CD8-positive, alpha-beta T cell (primary cell): ENCODE measurements at regions of chr5 and their contacts with region 1.

Region 1: GRCh38 chr5:94057217-94057616 is 315.8 kb upstream of the POU5F2 start:
- DNase-seq: no peak
- ATAC-seq: no peak
- H3K4me3 ChIP-seq: no peak overlapping the region
- H3K4me3 Mint-ChIP-seq: no peak overlapping the region
- H3K27ac ChIP-seq: no peak overlapping the region
- H3K27ac Mint-ChIP-seq: no peak overlapping the region
- H3K4me1 ChIP-seq: no peaks in the 10 kb centered on the region
- H3K4me1 Mint-ChIP-seq: peaks cover 36% of the 10 kb centered on the region
- H3K27me3 ChIP-seq: no peaks in the 10 kb centered on the region
- H3K27me3 Mint-ChIP-seq: no peaks in the 10 kb centered on the region
- CTCF ChIP-seq: no peak

Region 2: DNA sequence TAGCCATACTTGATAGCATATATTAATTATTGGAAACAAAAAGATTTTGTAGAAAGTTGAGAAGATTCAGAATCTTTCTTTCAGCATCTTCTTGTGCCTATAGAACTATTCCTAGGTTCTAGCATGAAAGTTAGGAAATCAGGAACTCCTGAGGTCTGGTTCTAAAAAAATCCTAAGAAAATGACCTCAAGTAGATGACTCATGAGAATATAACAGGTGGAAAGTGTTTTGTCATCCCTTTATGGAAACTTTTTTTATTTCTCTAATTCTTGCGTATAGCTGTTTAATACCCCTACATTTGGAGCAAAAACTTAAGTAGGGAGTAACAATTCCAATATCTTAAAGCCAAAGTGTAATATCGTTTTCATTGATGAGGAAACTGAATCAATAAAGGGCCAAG is 1050.3 kb before region 1 on chr5:
- CTCF ChIA-PET with region 1: no interaction called
- POLR2A ChIA-PET with region 1: no interaction called
- intact Hi-C with region 1: no loop called
- DNase-seq: no peak
- ATAC-seq: no peak
- H3K4me3 ChIP-seq: no peak overlapping the region
- H3K4me3 Mint-ChIP-seq: no peak overlapping the region
- H3K27ac ChIP-seq: no peak overlapping the region
- H3K27ac Mint-ChIP-seq: no peak overlapping the region
- H3K4me1 ChIP-seq: no peaks in the 10 kb centered on the region
- H3K4me1 Mint-ChIP-seq: no peaks in the 10 kb centered on the region
- H3K27me3 ChIP-seq: no peaks in the 10 kb centered on the region
- H3K27me3 Mint-ChIP-seq: no peaks in the 10 kb centered on the region
- CTCF ChIP-seq: no peak

Region 3: GRCh38 chr5:93874080-93874479 is 183.1 kb before region 1 on chr5:
- CTCF ChIA-PET with region 1: no interaction called
- POLR2A ChIA-PET with region 1: no interaction called
- intact Hi-C with region 1: no loop called
- DNase-seq: no peak
- ATAC-seq: no peak
- H3K4me3 ChIP-seq: no peak overlapping the region
- H3K4me3 Mint-ChIP-seq: no peak overlapping the region
- H3K27ac ChIP-seq: no peak overlapping the region
- H3K27ac Mint-ChIP-seq: no peak overlapping the region
- H3K4me1 ChIP-seq: no peaks in the 10 kb centered on the region
- H3K4me1 Mint-ChIP-seq: no peaks in the 10 kb centered on the region
- H3K27me3 ChIP-seq: no peaks in the 10 kb centered on the region
- H3K27me3 Mint-ChIP-seq: no peaks in the 10 kb centered on the region
- CTCF ChIP-seq: no peak

Region 4: GRCh38 chr5:93954421-93955069 is 102.7 kb before region 1 on chr5:
- CTCF ChIA-PET with region 1: no interaction called
- POLR2A ChIA-PET with region 1: no interaction called
- intact Hi-C with region 1: no loop called
- DNase-seq: no peak
- ATAC-seq: no peak
- H3K4me3 ChIP-seq: no peak overlapping the region
- H3K4me3 Mint-ChIP-seq: no peak overlapping the region
- H3K27ac ChIP-seq: no peak overlapping the region
- H3K27ac Mint-ChIP-seq: no peak overlapping the region
- H3K4me1 ChIP-seq: no peaks in the 10 kb centered on the region
- H3K4me1 Mint-ChIP-seq: no peaks in the 10 kb centered on the region
- H3K27me3 ChIP-seq: no peaks in the 10 kb centered on the region
- H3K27me3 Mint-ChIP-seq: no peaks in the 10 kb centered on the region
- CTCF ChIP-seq: no peak

Region 5: DNA sequence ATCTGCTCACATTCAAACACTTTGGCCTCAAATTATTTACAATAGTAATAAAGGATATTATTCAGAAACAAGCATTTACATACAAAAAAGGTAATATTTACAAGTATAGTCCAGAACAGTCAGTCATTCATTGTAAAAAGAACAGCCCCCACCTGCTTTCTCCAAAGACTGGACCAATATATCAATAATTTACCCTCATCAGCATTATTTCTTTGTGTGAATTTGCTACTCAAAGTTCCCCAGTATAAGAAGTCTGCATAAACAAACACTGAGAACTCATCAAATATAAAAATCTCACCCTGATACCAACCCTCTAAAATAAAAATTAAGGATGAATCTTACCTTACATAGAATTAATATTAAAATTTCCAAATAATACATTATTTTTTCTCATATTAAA is 48.1 kb before region 1 on chr5:
- CTCF ChIA-PET with region 1: no interaction called
- POLR2A ChIA-PET with region 1: no interaction called
- intact Hi-C with region 1: loop called in 1 of 2 experiments (anchors 10 kb)
- DNase-seq: no peak
- ATAC-seq: no peak
- H3K4me3 ChIP-seq: no peak overlapping the region
- H3K4me3 Mint-ChIP-seq: no peak overlapping the region
- H3K27ac ChIP-seq: no peak overlapping the region
- H3K27ac Mint-ChIP-seq: no peak overlapping the region
- H3K4me1 ChIP-seq: no peaks in the 10 kb centered on the region
- H3K4me1 Mint-ChIP-seq: peaks cover 7% of the 10 kb centered on the region
- H3K27me3 ChIP-seq: no peaks in the 10 kb centered on the region
- H3K27me3 Mint-ChIP-seq: no peaks in the 10 kb centered on the region
- CTCF ChIP-seq: no peak